OCI-LY7 (cell line): ENCODE measurements at regions of chr20 and their contacts with region 1.

Region 1: GRCh38 chr20:63381807-63382322 is 20.7 kb upstream of the CHRNA4 start:
- DNase-seq: no peak
- H3K4me3 ChIP-seq: no peak overlapping the region
- H3K27ac ChIP-seq: no peak overlapping the region
- H3K4me1 ChIP-seq: no peaks in the 10 kb centered on the region
- CTCF ChIP-seq: peak; percentile 82

Region 2: GRCh38 chr20:63309261-63310071 is 72.4 kb before region 1 on chr20:
- CTCF ChIA-PET with region 1: no interaction called
- POLR2A ChIA-PET with region 1: no interaction called
- intact Hi-C with region 1: loop called (anchors 5 kb)
- DNase-seq: peak; percentile 10
- H3K4me3 ChIP-seq: no peak overlapping the region
- H3K27ac ChIP-seq: no peak overlapping the region
- H3K4me1 ChIP-seq: no peaks in the 10 kb centered on the region
- CTCF ChIP-seq: peak; percentile 66